ENCODE measurements at regions of chr14 and their contacts with region 1.

Region 1: DNA sequence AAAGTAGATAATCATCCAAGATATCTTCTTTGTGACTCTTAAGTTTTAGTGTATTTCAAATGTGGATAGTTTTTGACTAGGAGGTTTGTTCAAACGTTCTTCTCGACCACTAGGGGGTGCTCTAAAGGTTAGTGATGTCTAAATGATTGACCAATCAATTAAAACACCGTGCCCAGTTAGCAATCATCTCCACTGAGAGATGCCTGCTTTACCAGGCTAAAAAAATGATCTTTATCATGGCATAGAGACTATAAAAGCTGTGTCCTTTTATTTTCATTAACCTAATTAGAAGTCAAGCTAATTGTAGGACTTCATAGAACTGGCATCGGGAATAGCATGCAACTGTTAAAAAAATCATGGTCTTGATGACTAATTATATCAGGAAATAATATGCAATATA is 153.9 kb downstream of the PRKCH start:
- DNase-seq: peak in 3 of 5 donors; percentile 38 to 52 (median 40)
- H3K4me3 ChIP-seq: no peak overlapping the region
- H3K4me3 Mint-ChIP-seq: peak overlapping the region in 6 of 8 donors; percentile 25 to 81 (median 48)
- H3K27ac ChIP-seq: peak overlapping the region; percentile 87
- H3K27ac Mint-ChIP-seq: peak overlapping the region; percentile 87 to 100 (median 93)
- H3K4me1 ChIP-seq: peaks cover 98% of the 10 kb centered on the region
- H3K4me1 Mint-ChIP-seq: peaks cover 76 to 97% (median 92%) of the 10 kb centered on the region in 4 donors
- H3K27me3 ChIP-seq: no peaks in the 10 kb centered on the region
- H3K27me3 Mint-ChIP-seq: no peaks in the 10 kb centered on the region

Region 2: DNA sequence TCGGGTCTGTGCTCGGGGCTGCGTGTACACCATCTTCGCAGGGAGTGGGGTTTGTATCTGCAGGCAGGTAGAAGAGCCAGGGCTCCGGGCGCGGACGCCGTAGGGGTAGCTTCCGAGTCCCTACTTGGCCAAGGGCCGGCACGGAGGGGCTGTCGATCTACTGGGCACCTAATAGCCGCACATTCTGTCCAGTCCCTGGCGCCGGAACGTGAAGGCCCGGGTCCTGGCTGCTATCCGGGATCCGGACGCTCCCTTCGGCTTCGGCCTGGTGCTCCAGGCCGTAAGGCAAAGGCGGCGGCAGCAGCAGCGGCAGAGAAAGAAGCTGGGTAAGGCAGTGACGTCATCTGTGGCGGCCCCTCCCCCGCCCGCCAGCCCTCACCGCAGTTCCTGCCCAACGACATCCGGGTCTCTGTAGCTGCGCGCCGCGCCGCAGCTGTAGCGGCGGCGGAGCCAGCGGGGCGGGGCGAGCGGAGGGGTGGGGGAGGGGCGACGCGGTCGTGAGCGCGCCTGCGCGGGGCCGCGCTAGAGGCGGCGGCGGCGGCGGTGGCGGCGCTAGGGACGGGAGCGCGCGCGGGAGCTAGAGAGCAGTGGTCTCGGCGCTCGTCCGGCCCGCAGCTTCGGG is 1226.5 kb before region 1 on chr14 and contains the start of gene PPM1A:
- CTCF ChIA-PET with region 1: no interaction called
- POLR2A ChIA-PET with region 1: no interaction called
- intact Hi-C with region 1: loop called (anchors 2 kb)
- DNase-seq: peak; percentile 93 to 95 (median 94)
- H3K4me3 ChIP-seq: peak within 1 kb of the TSS; percentile 79 to 92
- H3K4me3 Mint-ChIP-seq: peak within 1 kb of the TSS; percentile 95 to 98 (median 97)
- H3K27ac ChIP-seq: peak within 1 kb of the TSS; percentile 99
- H3K27ac Mint-ChIP-seq: peak within 1 kb of the TSS; percentile 99 to 100 (median 100)
- H3K4me1 ChIP-seq: peaks cover 55% of the 10 kb centered on the region
- H3K4me1 Mint-ChIP-seq: peaks cover 32 to 56% (median 42%) of the 10 kb centered on the region in 4 donors
- H3K27me3 ChIP-seq: no peaks in the 10 kb centered on the region
- H3K27me3 Mint-ChIP-seq: peaks cover 0 to 1% of the 10 kb centered on the region in 2 donors
- total RNA-seq, gene PPM1A: 48.2 to 48.5 TPM

Region 3: GRCh38 chr14:61335671-61336275 is 139.5 kb before region 1 on chr14:
- CTCF ChIA-PET with region 1: interaction called, 8 read pairs
- POLR2A ChIA-PET with region 1: interaction called, 11 read pairs
- intact Hi-C with region 1: no loop called
- DNase-seq: peak; percentile 65 to 78 (median 73)
- H3K4me3 ChIP-seq: peak overlapping the region; percentile 2 to 25
- H3K4me3 Mint-ChIP-seq: peak overlapping the region; percentile 78 to 87 (median 84)
- H3K27ac ChIP-seq: peak overlapping the region; percentile 84
- H3K27ac Mint-ChIP-seq: peak overlapping the region; percentile 93 to 100 (median 99)
- H3K4me1 ChIP-seq: peaks cover 94% of the 10 kb centered on the region
- H3K4me1 Mint-ChIP-seq: peaks cover 70 to 85% (median 78%) of the 10 kb centered on the region in 4 donors
- H3K27me3 ChIP-seq: no peaks in the 10 kb centered on the region
- H3K27me3 Mint-ChIP-seq: no peaks in the 10 kb centered on the region

Region 4: DNA sequence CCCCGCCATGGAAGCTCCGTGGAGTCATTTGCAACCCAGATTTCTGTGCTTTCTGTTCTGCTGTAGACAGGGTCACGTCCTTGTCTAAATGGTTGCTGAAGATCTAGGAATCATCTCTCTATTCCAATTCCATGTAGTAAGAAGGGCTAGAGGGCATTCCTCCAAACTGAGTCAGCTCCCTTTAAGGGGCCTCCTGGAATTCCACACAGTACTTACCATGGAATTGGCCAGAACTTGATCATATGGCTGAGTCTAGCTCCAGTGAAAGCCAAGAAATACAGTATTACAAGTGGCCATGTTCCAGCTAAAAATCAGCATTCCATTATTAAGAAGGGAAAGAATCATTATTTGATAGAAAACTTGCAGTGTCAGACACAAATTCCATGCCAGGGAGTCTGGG is 17.9 kb after region 1 on chr14:
- CTCF ChIA-PET with region 1: interaction called, 106 read pairs
- POLR2A ChIA-PET with region 1: interaction called, 15 read pairs
- intact Hi-C with region 1: loop called (anchors 2 kb)
- DNase-seq: no peak
- H3K4me3 ChIP-seq: no peak overlapping the region
- H3K4me3 Mint-ChIP-seq: no peak overlapping the region
- H3K27ac ChIP-seq: no peak overlapping the region
- H3K27ac Mint-ChIP-seq: no peak overlapping the region
- H3K4me1 ChIP-seq: peaks cover 65% of the 10 kb centered on the region
- H3K4me1 Mint-ChIP-seq: peaks cover 26 to 44% (median 40%) of the 10 kb centered on the region in 4 donors
- H3K27me3 ChIP-seq: no peaks in the 10 kb centered on the region
- H3K27me3 Mint-ChIP-seq: no peaks in the 10 kb centered on the region

Region 5: DNA sequence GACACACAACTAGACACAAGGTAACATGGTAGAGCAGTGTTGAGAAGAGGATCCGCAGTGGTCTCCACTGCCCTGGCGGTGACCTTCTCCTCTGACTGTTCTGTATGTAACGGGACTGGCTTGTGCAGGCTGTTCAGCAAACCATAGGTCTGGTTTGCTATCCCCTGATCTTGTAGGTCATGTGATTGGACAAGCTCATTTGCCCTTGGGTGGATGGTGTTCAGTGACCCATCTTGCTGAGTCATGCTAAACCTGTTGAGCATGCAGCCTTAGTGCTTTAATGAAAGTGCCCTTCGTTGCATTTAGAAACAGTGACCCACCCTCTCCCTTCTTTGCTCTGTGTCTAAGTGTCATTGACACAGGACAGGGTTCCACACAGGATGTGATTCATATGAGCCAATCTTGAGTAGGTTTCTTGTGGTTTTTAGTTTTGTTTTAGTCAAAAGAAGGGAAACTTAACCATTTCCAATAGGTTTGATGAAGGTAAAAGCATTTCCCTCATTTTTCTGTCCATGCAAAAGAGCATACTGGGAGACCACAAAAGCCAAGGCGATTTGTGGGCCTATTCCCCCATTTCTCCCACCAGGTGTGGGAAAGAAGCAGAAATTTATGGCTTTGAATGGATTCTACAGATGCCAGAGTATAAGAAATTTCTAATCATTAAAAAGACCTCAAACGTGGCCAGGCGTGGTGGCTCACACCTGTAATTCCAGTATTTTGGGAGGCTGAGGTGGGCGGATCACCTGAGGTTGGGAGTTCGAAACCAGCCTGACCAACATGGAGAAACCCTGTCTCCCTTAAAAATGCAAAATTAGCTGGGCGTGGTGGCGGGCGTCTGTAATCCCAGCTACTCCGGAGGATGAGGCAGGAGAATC is 187.4 kb after region 1 on chr14:
- CTCF ChIA-PET with region 1: interaction called, 4 read pairs
- POLR2A ChIA-PET with region 1: interaction called, 13 read pairs
- intact Hi-C with region 1: loop called (anchors 2 kb)
- DNase-seq: peak; percentile 61 to 78 (median 69)
- H3K4me3 ChIP-seq: peak overlapping the region; percentile 26 to 37
- H3K4me3 Mint-ChIP-seq: peak overlapping the region; percentile 74 to 92 (median 82)
- H3K27ac ChIP-seq: peak overlapping the region; percentile 37
- H3K27ac Mint-ChIP-seq: peak overlapping the region; percentile 92 to 98 (median 95)
- H3K4me1 ChIP-seq: peaks cover 57% of the 10 kb centered on the region
- H3K4me1 Mint-ChIP-seq: peaks cover 47 to 56% (median 54%) of the 10 kb centered on the region in 4 donors
- H3K27me3 ChIP-seq: no peaks in the 10 kb centered on the region
- H3K27me3 Mint-ChIP-seq: no peaks in the 10 kb centered on the region

Region 6: GRCh38 chr14:61730756-61731373 is 255.5 kb after region 1 on chr14:
- CTCF ChIA-PET with region 1: interaction called, 44 read pairs
- POLR2A ChIA-PET with region 1: interaction called, 3 read pairs
- intact Hi-C with region 1: loop called (anchors 1 kb)
- DNase-seq: peak in 4 of 5 donors; percentile 30 to 34 (median 30)
- H3K4me3 ChIP-seq: no peak overlapping the region
- H3K4me3 Mint-ChIP-seq: no peak overlapping the region
- H3K27ac ChIP-seq: no peak overlapping the region
- H3K27ac Mint-ChIP-seq: peak overlapping the region in 6 of 7 donors; percentile 2 to 83 (median 52)
- H3K4me1 ChIP-seq: peaks cover 5% of the 10 kb centered on the region
- H3K4me1 Mint-ChIP-seq: peaks cover 10 to 16% (median 12%) of the 10 kb centered on the region in 4 donors
- H3K27me3 ChIP-seq: no peaks in the 10 kb centered on the region
- H3K27me3 Mint-ChIP-seq: no peaks in the 10 kb centered on the region